Activated CD4-positive, alpha-beta T cell treated with anti-CD3 and anti-CD28 coated beads, Interleukin-2, amount 10 ng/mL, durations not matched to agents 24 days and 14 days (primary cell): ENCODE measurements at regions of chr4 and their contacts with region 1.

Region 1: GRCh38 chr4:38759113-38759789 is 23.5 kb downstream of the TLR10 start:
- DNase-seq: peak; percentile 89
- H3K4me3 Mint-ChIP-seq: no peak overlapping the region
- H3K27ac Mint-ChIP-seq: no peak overlapping the region
- H3K4me1 Mint-ChIP-seq: peaks cover 23% of the 10 kb centered on the region
- H3K27me3 Mint-ChIP-seq: peaks cover 2% of the 10 kb centered on the region

Region 2: GRCh38 chr4:38489924-38490639 is 269.2 kb before region 1 on chr4:
- intact Hi-C with region 1: no loop called
- DNase-seq: peak; percentile 57
- H3K4me3 Mint-ChIP-seq: no peak overlapping the region
- H3K27ac Mint-ChIP-seq: no peak overlapping the region
- H3K4me1 Mint-ChIP-seq: peaks cover 11% of the 10 kb centered on the region
- H3K27me3 Mint-ChIP-seq: peaks cover 8% of the 10 kb centered on the region

Region 3: DNA sequence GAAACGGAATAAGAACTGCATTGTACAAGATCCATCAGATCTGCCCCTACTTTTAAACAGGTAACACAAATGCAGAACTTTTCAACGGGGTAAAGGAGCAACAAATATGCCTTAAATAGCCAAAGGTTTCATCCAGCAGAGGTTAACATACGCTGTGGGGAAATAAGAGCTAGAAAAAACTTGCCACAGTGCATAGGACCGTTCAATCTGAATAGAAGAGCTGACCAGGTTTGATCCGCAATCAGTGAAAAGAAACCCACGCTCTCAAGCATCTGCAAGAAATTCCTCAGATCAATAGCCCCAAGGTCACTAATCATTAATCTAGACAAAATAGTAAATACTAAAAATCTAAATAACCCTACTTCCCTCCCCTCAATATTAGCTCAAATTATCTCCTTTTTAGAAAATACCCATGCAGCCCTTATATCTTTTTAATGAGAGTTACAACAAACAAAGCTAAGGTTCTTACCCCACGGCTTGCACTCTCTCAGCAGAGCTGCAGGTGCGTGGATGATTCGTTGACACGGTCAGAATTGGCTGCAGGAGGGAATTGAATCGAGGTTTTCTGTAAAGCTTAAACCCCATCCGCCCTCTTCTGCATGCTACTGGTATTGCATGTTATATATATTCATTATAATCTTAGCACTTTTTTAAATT is 23.3 kb after region 1 on chr4 and contains the start of gene TLR10:
- intact Hi-C with region 1: loop called (anchors 2 kb)
- DNase-seq: peak; percentile 81
- H3K4me3 Mint-ChIP-seq: peak within 1 kb of the TSS; percentile 31
- H3K27ac Mint-ChIP-seq: no peak within 1 kb of the TSS
- H3K4me1 Mint-ChIP-seq: peaks cover 8% of the 10 kb centered on the region
- H3K27me3 Mint-ChIP-seq: peaks cover 4% of the 10 kb centered on the region
- total RNA-seq, gene TLR10: not detected in 2 replicates

Region 4: GRCh38 chr4:38804654-38805295 is 45.5 kb after region 1 on chr4 and contains the start of gene TLR1:
- intact Hi-C with region 1: loop called (anchors 2 kb)
- DNase-seq: peak; percentile 79
- H3K4me3 Mint-ChIP-seq: peak within 1 kb of the TSS; percentile 81
- H3K27ac Mint-ChIP-seq: peak within 1 kb of the TSS; percentile 86
- H3K4me1 Mint-ChIP-seq: peaks cover 29% of the 10 kb centered on the region
- H3K27me3 Mint-ChIP-seq: no peaks in the 10 kb centered on the region
- total RNA-seq, gene TLR1: 0.85 and 2.6 TPM in 2 replicates

Region 5: DNA sequence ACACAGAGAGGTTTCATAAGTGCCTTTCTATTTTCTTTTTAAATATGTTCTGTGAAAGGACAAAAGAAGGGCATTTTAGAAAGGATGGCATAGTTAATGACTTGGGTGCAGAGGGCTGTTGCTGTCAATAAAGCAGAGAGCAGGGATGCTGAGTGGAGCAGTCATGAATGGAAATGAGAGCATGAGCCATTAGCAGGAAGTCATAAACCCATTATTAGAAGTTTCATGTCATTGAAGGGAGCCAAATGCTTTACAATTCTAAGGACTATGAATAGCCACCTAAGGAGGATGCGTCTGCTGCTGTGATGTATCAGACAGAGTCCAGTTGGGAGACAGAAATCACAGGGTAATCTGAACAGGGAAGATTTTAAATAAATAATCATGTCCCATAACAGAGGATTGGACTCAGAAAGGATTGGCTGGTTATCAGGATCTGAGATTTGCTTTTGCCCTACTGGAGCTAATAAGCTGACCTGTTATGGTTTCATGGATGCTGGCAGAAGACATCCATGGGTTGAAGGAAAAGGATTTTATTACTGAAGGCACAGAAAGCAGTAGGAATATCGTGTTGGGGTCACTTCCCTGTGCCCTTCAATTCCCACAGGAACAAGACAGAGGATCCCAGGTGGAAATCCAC is 375.6 kb after region 1 on chr4:
- intact Hi-C with region 1: loop called (anchors 2 kb)
- DNase-seq: no peak
- H3K4me3 Mint-ChIP-seq: no peak overlapping the region
- H3K27ac Mint-ChIP-seq: peak overlapping the region; percentile 36
- H3K4me1 Mint-ChIP-seq: peaks cover 13% of the 10 kb centered on the region
- H3K27me3 Mint-ChIP-seq: no peaks in the 10 kb centered on the region